ENCODE measurements at regions of chr5 and their contacts with region 1.

Region 1: DNA sequence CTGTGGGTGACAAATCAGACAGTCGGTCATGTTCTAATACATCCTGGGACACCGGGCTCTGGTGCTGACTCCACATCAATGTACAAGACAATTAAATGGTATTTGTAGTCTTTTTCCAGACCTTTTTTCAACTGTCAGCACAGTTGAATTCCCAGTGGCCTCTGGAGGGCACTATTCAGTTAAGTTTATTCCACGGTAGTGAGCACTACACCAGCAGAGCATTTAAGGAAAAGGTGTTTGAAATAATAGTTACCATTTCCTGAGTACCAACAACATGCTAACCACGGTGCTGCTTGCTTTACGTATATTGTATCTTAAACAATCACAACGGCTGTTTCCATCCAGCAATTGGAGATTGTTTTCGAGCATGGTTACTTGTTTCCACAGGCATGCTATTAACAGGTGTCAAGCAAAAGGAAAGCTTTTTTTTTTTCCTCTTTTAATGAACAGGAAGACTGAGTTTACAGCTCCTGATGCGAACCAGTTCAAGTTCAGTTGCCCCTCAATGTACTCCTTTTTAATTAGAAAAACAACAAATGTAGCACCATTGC is 186.7 kb downstream of the PDZD2 start:
- DNase-seq: peak; percentile 83
- H3K4me3 Mint-ChIP-seq: no peak overlapping the region
- H3K27ac Mint-ChIP-seq: no peak overlapping the region
- H3K4me1 Mint-ChIP-seq: no peaks in the 10 kb centered on the region
- H3K27me3 Mint-ChIP-seq: peaks cover 2% of the 10 kb centered on the region

Region 2: GRCh38 chr5:32076699-32077695 is 251.4 kb after region 1 on chr5:
- intact Hi-C with region 1: loop called (anchors 1 kb)
- DNase-seq: peak; percentile 81
- H3K4me3 Mint-ChIP-seq: no peak overlapping the region
- H3K27ac Mint-ChIP-seq: no peak overlapping the region
- H3K4me1 Mint-ChIP-seq: no peaks in the 10 kb centered on the region
- H3K27me3 Mint-ChIP-seq: no peaks in the 10 kb centered on the region

Region 3: GRCh38 chr5:32092938-32093812 is 267.6 kb after region 1 on chr5:
- intact Hi-C with region 1: loop called (anchors 5 kb)
- DNase-seq: peak; percentile 89
- H3K4me3 Mint-ChIP-seq: no peak overlapping the region
- H3K27ac Mint-ChIP-seq: no peak overlapping the region
- H3K4me1 Mint-ChIP-seq: peaks cover 3% of the 10 kb centered on the region
- H3K27me3 Mint-ChIP-seq: no peaks in the 10 kb centered on the region

Measured in activated CD4-positive, alpha-beta T cell treated with anti-CD3 and anti-CD28 coated beads, Interleukin-2, amount 10 ng/mL, durations not matched to agents 24 days and 14 days (primary cell).